BJ (cell line): ENCODE measurements at regions of chr9 and their contacts with region 1.

Region 1: DNA sequence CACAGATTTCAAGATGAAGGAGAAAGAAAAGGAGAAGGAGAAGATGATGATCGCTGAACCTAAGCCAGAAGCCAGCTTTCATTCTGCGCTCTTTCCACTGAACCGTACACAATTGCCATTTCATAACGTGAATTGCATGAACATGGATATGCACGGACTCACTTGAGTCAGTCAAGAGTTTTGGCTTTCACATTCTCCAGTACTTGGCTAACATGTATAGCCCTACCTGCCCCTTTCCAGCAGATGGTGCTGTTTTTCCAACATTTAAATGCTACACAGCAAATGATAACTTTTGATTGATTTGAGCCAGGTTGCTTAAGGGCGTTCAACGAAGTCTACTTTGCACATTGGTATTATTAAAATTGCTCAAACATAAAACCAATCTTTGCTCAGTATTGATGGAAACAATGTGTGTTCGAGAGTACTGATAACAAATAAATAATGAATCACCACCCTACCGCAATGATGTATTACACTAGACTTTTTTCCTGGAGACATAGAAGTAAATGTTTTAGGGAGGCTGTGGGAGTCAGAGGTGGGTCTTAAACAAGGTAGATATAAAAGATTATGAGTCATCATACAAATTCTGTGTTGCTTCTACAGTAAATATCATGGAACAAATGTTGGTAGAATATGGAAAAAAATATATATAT is 196.4 kb downstream of the TRPM3 start:
- DNase-seq: no peak
- H3K4me3 ChIP-seq: no peak overlapping the region
- H3K27me3 ChIP-seq: no peaks in the 10 kb centered on the region
- CTCF ChIP-seq: peak; percentile 81

Region 2: GRCh38 chr9:70639853-70640814 is 284.9 kb before region 1 on chr9:
- CTCF ChIA-PET with region 1: interaction called, 27 read pairs
- POLR2A ChIA-PET with region 1: no interaction called
- DNase-seq: peak; percentile 14
- H3K4me3 ChIP-seq: no peak overlapping the region
- H3K27me3 ChIP-seq: peaks cover 6% of the 10 kb centered on the region; the same call in 1 of the 2 replicates
- CTCF ChIP-seq: peak; percentile 62

Region 3: DNA sequence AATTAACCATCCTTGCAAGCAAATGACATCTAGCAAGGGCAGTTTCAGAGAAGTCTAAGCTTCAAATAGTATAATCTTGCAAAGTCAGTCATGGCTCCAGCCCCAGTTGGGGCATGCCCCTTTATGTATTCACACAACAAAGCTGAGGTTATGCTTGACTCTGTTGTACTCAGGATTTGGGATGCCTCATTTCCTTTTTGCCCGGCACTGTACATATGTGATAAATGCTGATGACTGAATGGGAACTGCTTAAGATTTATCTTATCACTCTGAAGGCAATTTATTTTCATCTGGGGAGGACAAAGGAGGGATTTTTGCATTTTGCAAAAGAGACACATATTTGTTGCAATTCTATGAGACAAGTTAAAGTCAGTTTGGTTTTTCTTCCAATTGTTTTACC is 22.9 kb before region 1 on chr9:
- CTCF ChIA-PET with region 1: no interaction called
- POLR2A ChIA-PET with region 1: no interaction called
- DNase-seq: no peak
- H3K4me3 ChIP-seq: no peak overlapping the region
- H3K27me3 ChIP-seq: no peaks in the 10 kb centered on the region
- CTCF ChIP-seq: no peak

Region 4: GRCh38 chr9:70935856-70936255 is 10.8 kb after region 1 on chr9:
- CTCF ChIA-PET with region 1: interaction called, 10 read pairs
- POLR2A ChIA-PET with region 1: no interaction called
- DNase-seq: peak; percentile 81
- H3K4me3 ChIP-seq: no peak overlapping the region
- H3K27me3 ChIP-seq: no peaks in the 10 kb centered on the region
- CTCF ChIP-seq: no peak

Region 5: DNA sequence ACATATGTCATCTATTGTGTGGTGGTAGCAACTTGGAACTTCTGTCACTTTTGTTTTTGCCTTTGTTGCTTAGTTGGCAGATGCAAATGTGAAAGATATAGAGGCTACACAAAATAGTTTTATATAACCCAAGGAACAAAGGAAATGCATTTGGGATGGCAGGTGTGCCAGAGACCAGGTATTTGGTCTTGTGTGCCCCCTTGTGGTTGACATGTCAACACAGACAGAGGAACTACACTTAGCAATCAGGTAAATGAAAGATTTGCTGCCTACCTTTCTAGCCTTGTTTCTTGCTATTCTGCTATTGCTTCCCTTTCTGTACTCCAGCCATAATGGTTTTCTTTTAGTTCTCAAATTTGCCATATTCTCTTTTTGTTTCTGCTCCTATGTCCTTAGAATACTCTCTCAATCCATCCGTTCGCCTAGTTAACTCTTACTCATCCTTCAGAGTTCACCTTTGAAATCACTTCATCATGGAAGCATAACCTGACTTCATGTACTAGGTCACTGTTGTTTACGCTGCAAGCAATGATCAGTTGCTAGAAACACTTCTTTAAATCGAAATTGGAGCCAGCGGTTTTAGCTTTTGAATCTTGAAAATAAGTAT is 76.9 kb after region 1 on chr9:
- CTCF ChIA-PET with region 1: interaction called, 11 read pairs
- POLR2A ChIA-PET with region 1: no interaction called
- DNase-seq: no peak
- H3K4me3 ChIP-seq: no peak overlapping the region
- H3K27me3 ChIP-seq: no peaks in the 10 kb centered on the region
- CTCF ChIP-seq: peak; percentile 61

Region 6: GRCh38 chr9:71249729-71250317 is 324.8 kb after region 1 on chr9:
- CTCF ChIA-PET with region 1: interaction called, 61 read pairs
- POLR2A ChIA-PET with region 1: no interaction called
- DNase-seq: peak; percentile 19
- H3K4me3 ChIP-seq: no peak overlapping the region
- H3K27me3 ChIP-seq: no peaks in the 10 kb centered on the region
- CTCF ChIP-seq: peak; percentile 84